OCI-LY7 (cell line): ENCODE measurements at regions of chr4 and their contacts with region 1.

Region 1: GRCh38 chr4:41257257-41257901 is 651 bp downstream of the UCHL1 start:
- DNase-seq: peak; percentile 79
- H3K4me3 ChIP-seq: peak overlapping the region; percentile 90
- H3K27ac ChIP-seq: peak overlapping the region; percentile 67
- H3K4me1 ChIP-seq: peaks cover 32% of the 10 kb centered on the region
- CTCF ChIP-seq: no peak

Region 2: DNA sequence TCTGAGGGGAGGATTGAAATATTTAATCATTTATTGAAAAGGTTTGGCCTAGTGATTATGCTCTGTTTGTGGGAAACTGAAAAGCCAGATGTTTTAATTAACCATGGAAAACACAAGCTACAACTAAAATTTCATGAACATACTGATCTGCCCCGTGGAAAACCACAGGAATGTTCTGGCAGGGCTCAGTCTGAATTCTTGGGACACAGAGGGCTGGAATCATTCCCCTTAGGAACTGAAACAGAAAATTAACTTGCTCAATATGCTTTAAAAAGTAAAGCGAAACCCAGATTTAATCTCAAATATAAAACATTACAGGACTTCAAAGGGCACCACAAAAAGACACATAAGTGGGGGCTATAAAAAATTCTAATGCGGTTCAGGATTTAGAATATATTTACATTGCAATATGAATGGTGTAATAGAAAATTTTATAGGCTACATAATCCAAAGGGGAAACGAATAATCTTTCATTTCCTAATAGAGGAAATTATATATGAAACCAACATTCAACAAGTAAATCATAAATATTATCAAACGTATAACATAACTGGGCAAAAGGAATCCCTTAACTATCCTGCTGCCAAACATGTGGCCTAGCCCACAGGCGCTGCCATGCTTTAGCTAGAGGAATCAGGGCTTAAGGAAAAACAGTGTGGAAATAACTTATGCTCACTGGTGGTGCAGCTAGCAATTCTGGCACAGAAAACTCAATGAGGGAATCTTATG is 113.9 kb before region 1 on chr4:
- CTCF ChIA-PET with region 1: no interaction called
- POLR2A ChIA-PET with region 1: no interaction called
- intact Hi-C with region 1: no loop called
- DNase-seq: no peak
- H3K4me3 ChIP-seq: no peak overlapping the region
- H3K27ac ChIP-seq: no peak overlapping the region
- H3K4me1 ChIP-seq: peaks cover 6% of the 10 kb centered on the region
- CTCF ChIP-seq: no peak

Region 3: GRCh38 chr4:41160012-41160789 is 97.2 kb before region 1 on chr4:
- CTCF ChIA-PET with region 1: no interaction called
- POLR2A ChIA-PET with region 1: no interaction called
- intact Hi-C with region 1: no loop called
- DNase-seq: no peak
- H3K4me3 ChIP-seq: no peak overlapping the region
- H3K27ac ChIP-seq: no peak overlapping the region
- H3K4me1 ChIP-seq: no peaks in the 10 kb centered on the region
- CTCF ChIP-seq: no peak

Region 4: DNA sequence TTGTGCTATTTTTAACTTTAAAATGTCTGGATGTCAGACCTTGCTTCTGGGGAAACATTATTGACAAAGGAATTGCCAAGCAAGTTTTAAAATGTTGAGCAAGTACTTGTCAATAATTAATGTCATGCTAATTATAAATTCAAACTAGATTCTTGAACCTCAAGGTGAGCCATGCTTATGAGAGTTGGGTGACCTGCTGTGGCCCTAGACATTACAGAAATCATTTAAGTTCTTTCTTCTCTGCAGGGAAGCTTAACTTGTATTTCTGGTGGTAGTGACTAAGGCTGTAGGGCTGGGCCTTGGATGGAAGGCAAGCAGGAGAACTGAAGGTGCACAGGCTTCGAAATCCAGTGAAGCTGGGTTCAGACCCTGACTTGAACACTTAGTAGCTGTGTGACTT is 15.5 kb before region 1 on chr4:
- CTCF ChIA-PET with region 1: no interaction called
- POLR2A ChIA-PET with region 1: interaction called, 13 read pairs
- intact Hi-C with region 1: no loop called
- DNase-seq: no peak
- H3K4me3 ChIP-seq: no peak overlapping the region
- H3K27ac ChIP-seq: no peak overlapping the region
- H3K4me1 ChIP-seq: no peaks in the 10 kb centered on the region
- CTCF ChIP-seq: no peak

Region 5: GRCh38 chr4:41590591-41590990 is 333.2 kb after region 1 on chr4:
- CTCF ChIA-PET with region 1: no interaction called
- POLR2A ChIA-PET with region 1: no interaction called
- intact Hi-C with region 1: no loop called
- DNase-seq: no peak
- H3K4me3 ChIP-seq: no peak overlapping the region
- H3K27ac ChIP-seq: no peak overlapping the region
- H3K4me1 ChIP-seq: no peaks in the 10 kb centered on the region
- CTCF ChIP-seq: no peak